ENCODE measurements at regions of chr7 and their contacts with region 1.

Region 1: GRCh38 chr7:141014524-141015395 is at the start of gene MRPS33:
- DNase-seq: peak; percentile 97
- total RNA-seq, gene MRPS33: 92.4 TPM

Region 2: DNA sequence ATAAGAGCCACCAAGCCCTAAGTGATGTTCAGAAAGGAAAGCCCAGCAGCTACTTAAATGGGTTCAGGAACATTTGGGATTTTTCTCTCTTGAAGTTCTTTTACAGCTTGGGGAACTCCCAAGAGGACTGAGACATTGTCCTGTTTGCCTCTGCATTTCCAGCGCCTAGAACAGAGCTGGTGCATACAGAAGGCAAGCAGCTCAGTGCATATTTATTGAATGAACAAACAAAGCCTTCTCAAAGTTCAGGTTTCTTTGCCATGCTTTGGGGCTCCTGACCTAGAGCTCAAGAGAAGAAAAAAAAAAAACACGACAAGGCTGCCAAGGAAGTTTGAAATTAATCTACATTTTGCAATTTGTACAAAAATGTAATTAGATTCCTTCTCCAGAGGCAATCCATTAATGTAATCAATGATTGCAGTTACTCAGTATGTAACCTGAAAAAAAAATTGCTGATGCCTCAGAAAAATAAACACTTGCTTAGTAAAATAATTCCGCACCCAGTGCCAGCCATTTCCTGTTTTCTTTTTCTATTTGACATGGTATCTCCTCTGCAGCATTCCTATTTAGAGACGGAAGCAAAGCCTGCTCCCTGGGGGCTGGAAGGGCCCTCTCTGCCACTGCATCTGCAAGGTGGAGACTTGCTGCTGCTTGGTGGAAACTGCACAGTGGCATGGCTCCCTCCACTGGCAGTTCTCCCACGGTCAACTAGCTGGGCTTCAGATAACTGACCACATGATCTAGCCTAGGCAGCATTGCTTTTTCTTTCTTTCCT is 216.4 kb after region 1 on chr7:
- intact Hi-C with region 1: loop called (anchors 5 kb)
- DNase-seq: no peak

Measured in cardiac septum (tissue), 1 donor.